Stomach (tissue), 19 donors: ENCODE measurements at regions of chr5 and their contacts with region 1.

Region 1: DNA sequence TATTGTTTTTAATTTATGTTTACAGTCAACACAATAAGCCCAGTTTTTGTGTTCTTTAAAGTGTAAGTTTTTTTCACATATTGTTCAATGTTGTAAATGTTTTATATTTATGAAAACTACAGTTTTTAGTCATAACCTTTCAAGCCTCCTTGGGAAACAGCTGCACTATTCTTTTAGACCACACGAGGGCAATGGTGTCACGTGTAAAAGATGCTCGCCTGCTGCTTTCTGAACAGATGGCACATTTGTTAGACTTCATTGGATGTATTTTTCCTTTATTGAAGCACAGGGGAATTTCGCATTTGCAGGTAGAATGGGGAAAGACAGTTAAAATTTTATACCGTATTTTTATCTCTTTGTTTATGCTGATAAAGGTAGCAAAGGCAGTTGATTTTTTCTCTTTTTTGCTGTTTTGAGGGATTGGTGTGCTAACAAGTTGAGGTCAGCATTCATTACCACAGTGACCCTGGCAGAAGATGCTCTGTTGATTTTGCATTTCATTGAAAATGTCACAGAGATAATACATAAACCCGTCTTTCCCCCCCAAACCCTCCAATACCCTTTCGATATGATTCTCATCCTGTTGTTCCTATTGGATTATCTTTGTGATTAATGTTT is 59.0 kb downstream of the MAT2B start:
- DNase-seq: peak; percentile 62 to 84
- H3K4me3 ChIP-seq: no peak overlapping the region
- H3K27ac ChIP-seq: no peak overlapping the region
- H3K4me1 ChIP-seq: peaks cover 13 to 22% (median 18%) of the 10 kb centered on the region in 4 donors
- H3K27me3 ChIP-seq: peaks cover 0 to 40% (median 25%) of the 10 kb centered on the region in 3 donors
- CTCF ChIP-seq: peak in 5 of 7 experiments; percentile 73 to 91 (median 78)
- EP300 ChIP-seq: no peak
- POLR2A ChIP-seq: no peak

Region 2: DNA sequence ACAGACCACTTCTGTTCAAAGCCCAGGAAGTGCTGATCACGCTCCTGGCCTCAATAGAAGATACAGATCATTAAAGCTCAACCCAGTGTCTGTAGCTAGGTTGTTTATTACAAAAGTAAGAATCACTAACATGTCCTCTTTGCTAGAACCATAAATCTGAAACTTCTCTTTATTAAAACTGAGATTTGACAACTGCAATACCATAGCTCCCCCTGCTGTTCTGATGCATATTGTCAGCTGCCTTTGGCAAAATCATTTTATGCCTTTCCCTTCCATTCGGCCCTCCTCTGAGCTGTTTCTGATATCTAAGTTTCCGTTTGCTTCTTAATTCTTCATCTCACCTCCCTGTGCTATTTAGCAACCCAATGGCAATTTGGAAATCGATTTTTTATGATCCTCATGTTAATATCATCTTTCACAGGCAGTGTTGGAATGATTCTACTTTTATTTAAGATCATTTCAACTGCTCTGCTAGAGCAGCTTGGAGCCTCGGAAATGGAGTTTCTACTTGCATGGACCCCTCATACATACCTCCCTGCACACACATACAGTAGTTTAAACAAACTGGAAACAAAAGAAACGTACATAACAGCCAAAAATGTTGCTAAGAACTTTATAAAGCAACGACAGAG is 939.8 kb after region 1 on chr5:
- intact Hi-C with region 1: loop called (anchors 10 kb)
- DNase-seq: peak; percentile 36 to 83
- H3K4me3 ChIP-seq: no peak overlapping the region
- H3K27ac ChIP-seq: no peak overlapping the region
- H3K4me1 ChIP-seq: peaks cover 0 to 15% (median 8%) of the 10 kb centered on the region in 4 donors
- H3K27me3 ChIP-seq: no peaks in the 10 kb centered on the region
- CTCF ChIP-seq: peak in 5 of 7 experiments; percentile 56 to 84 (median 74)
- EP300 ChIP-seq: no peak
- POLR2A ChIP-seq: no peak